ENCODE measurements at regions of chr6 and their contacts with region 1.

Region 1: DNA sequence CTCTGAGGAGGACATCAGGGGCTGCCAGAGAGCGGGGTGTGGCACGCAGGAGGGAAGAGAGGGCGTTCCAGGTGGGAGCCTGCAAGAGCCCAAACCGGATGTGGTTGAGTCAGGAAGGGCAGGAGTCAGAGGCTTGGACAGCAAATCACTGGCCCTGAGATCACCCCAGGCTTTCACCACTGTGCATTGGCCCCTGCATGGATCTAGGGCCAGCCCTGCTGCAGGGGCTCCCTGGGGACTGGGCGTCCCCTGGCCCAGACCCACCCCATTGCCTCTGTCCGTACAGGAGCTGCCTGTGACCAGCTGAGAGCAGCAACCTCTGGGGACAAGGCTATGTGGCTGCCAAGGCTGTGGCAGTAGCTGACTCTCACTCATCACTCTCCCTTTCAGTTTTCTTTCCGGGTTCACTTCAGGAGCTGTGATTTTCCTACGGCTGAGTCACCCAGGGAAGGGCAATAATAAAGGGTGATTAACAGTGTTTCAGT is 33.9 kb downstream of the KCNK17 start:
- DNase-seq: no peak
- ATAC-seq: peak in 4 of 8 donors; percentile 22 to 83 (median 50)
- H3K4me3 ChIP-seq: no peak overlapping the region
- H3K27ac ChIP-seq: no peak overlapping the region
- H3K4me1 ChIP-seq: no peaks in the 10 kb centered on the region
- H3K27me3 ChIP-seq: peaks cover 0 to 26% (median 5%) of the 10 kb centered on the region in 7 donors
- CTCF ChIP-seq: no peak

Region 2: DNA sequence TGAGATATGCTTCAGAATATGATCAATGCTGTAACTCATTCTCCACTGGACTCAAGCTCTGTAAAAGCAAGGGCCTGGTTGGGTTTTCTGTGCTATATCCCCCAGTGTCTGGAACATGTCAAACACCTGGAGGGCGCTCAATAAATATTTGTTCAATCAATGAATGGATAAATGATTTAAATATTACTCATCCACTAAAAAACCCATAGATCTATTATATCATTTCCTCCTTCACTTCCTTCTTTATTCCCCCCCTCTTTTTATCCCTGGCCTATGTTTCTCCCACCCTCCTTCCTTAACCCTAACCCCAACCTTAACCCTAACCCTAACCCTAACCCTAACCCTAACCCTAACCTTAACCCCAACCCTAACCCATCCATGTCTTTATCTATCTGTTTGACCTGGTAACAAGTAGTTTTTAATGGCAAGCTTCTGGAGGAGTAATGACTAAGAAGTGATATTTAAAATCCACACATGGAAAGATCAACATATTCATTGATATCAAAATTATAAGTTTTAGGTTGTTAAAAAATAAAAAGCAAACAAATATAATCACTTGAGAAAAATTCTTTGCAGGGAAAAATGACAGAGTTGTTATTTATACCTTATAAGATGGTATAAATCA is 335.5 kb before region 1 on chr6:
- intact Hi-C with region 1: loop called in 1 of 10 experiments (anchors 5 kb)
- DNase-seq: no peak
- ATAC-seq: no peak
- H3K4me3 ChIP-seq: no peak overlapping the region
- H3K27ac ChIP-seq: no peak overlapping the region
- H3K4me1 ChIP-seq: no peaks in the 10 kb centered on the region
- H3K27me3 ChIP-seq: peaks cover 0 to 31% (median 8%) of the 10 kb centered on the region in 7 donors
- CTCF ChIP-seq: no peak

Region 3: DNA sequence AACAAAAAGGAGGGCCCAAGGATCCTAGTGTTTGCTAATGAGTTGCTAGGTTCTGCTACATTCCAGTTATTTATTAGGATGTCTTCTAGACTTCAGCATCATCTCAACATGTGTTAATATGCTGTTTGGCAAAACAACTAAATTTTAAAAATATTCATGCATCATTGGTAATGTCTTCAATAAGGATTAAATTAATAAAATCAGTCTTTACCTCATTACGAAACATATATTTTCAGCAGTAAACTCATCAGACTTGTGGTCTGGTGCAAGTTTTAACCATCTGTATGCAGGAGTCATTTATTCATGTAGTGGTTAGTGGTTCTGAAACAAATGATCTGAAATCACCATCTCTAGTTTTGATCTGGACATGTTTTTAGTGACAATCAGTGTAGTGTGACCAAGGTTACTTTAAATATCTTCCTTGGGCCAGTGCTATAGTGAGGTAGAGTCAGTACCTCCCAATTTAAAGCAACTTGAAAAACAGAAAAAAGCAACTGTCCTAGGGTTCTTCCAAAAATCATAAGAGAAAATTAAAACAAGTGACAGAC is 127.2 kb after region 1 on chr6:
- intact Hi-C with region 1: no loop called
- DNase-seq: no peak
- ATAC-seq: no peak
- H3K4me3 ChIP-seq: no peak overlapping the region
- H3K27ac ChIP-seq: no peak overlapping the region
- H3K4me1 ChIP-seq: no peaks in the 10 kb centered on the region
- H3K27me3 ChIP-seq: peaks cover 0 to 4% (median 0%) of the 10 kb centered on the region in 7 donors
- CTCF ChIP-seq: no peak

Region 4: DNA sequence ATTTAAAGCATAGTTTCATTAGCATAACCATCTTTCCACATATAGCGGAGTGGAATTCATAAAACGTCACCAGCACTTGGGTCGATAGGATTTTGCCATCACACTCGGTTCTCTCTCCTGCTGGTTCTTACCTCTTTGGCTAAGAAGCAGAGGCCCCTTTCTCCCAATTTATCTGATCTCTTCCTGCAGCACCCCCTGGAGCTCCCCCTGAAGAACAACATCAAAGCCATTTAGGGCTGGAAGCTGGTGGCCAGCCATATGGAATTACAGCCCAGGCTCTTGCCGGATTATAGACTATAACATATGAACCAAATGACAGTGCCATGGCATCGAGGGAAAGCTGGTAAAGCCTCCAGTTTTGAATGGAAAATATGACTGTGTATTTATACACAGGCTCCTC is 451.3 kb after region 1 on chr6:
- intact Hi-C with region 1: no loop called
- DNase-seq: no peak
- ATAC-seq: no peak
- H3K4me3 ChIP-seq: no peak overlapping the region
- H3K27ac ChIP-seq: no peak overlapping the region
- H3K4me1 ChIP-seq: no peaks in the 10 kb centered on the region
- H3K27me3 ChIP-seq: peaks cover 0 to 5% (median 0%) of the 10 kb centered on the region in 7 donors
- CTCF ChIP-seq: no peak

Measured in heart right ventricle (tissue), 16 donors.